Uterus (tissue), 4 donors: ENCODE measurements at regions of chr17 and their contacts with region 1.

Region 1: GRCh38 chr17:76868176-76868668 is at the start of gene MGAT5B:
- DNase-seq: peak; percentile 54 to 74
- H3K4me3 ChIP-seq: peak within 1 kb of the TSS in 1 of 2 donors; percentile 37
- H3K27ac ChIP-seq: no peak within 1 kb of the TSS
- H3K4me1 ChIP-seq: peaks cover 0 to 21% of the 10 kb centered on the region in 2 donors
- H3K27me3 ChIP-seq: peaks cover 12 to 18% of the 10 kb centered on the region in 2 donors
- CTCF ChIP-seq: peak; percentile 39 to 98 (median 94)
- POLR2A ChIP-seq: no peak
- total RNA-seq, gene MGAT5B: 0.59 to 3.3 (median 1.5) TPM in 3 of 4 donors, not detected in the other

Region 2: DNA sequence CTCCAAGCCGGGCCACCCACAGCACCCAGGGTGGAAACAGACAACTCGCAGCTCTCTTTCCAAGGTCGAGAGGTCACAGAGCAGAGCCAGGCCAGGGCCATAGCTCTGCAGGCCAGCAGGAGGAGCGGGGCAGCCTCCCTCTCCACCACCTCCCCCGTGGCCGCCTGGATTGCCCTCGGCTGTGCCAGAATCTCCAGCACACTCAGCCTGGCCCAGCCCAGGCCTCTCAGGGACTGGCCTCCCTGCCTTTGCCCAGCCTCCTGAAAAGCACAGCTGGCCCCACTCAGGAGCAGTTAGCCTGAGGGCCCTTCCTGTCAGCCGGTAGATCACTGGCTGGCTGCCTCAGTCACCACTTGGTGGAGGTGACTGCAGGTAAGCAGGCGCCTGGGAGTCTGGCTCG is 186.7 kb after region 1 on chr17:
- intact Hi-C with region 1: loop called (anchors 5 kb)
- DNase-seq: no peak
- H3K4me3 ChIP-seq: no peak overlapping the region
- H3K27ac ChIP-seq: no peak overlapping the region
- H3K4me1 ChIP-seq: no peaks in the 10 kb centered on the region
- H3K27me3 ChIP-seq: peaks cover 0 to 5% of the 10 kb centered on the region in 2 donors
- CTCF ChIP-seq: no peak
- POLR2A ChIP-seq: no peak

Region 3: DNA sequence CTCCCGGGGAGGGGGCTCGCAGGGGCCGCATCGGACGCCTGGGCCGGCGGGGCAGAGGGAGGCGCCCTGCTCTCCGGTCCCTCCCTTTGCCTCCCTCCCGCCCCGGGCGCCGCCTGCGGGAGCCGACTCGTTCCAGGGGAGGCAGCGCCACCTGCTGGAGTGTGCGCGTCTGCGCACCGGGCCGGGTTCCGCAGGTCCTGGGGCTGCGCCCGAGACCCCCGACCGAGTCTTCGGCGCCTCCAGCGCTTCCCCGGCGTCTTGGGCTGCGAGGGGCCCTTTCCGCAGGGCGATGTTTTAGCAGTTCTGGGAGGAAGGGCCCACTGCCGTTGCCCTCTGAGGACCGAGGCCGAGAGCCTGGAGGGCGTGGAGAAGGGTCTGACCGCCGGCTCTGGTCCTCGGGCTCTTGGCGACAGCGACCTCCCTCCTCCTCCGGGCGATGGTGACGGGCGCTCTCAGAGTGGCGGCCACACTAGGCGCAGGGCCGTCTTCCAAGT is 378.9 kb after region 1 on chr17:
- intact Hi-C with region 1: loop called (anchors 5 kb)
- DNase-seq: peak; percentile 75 to 83
- H3K4me3 ChIP-seq: peak overlapping the region; percentile 40 to 41
- H3K27ac ChIP-seq: peak overlapping the region; percentile 21 to 58
- H3K4me1 ChIP-seq: peaks cover 0 to 6% of the 10 kb centered on the region in 2 donors
- H3K27me3 ChIP-seq: no peaks in the 10 kb centered on the region
- CTCF ChIP-seq: peak; percentile 99 to 100 (median 99)
- POLR2A ChIP-seq: peak in 1 of 2 donors; percentile 4